Sigmoid colon (tissue), 7 donors: ENCODE measurements at regions of chr5 and their contacts with region 1.

Region 1: GRCh38 chr5:923281-923873 is 30.7 kb downstream of the TRIP13 start:
- DNase-seq: peak; percentile 89
- H3K4me3 ChIP-seq: no peak overlapping the region
- H3K27ac ChIP-seq: no peak overlapping the region
- H3K4me1 ChIP-seq: peaks cover 0 to 14% (median 13%) of the 10 kb centered on the region in 4 donors
- H3K27me3 ChIP-seq: peaks cover 0 to 15% (median 11%) of the 10 kb centered on the region in 3 donors
- CTCF ChIP-seq: peak; percentile 68 to 93 (median 80)
- EP300 ChIP-seq: no peak
- POLR2A ChIP-seq: no peak

Region 2: GRCh38 chr5:1140171-1140817 is 216.9 kb after region 1 on chr5:
- intact Hi-C with region 1: loop called (anchors 1 kb)
- DNase-seq: peak; percentile 88
- H3K4me3 ChIP-seq: no peak overlapping the region
- H3K27ac ChIP-seq: no peak overlapping the region
- H3K4me1 ChIP-seq: peaks cover 0 to 16% (median 8%) of the 10 kb centered on the region in 4 donors
- H3K27me3 ChIP-seq: no peaks in the 10 kb centered on the region
- CTCF ChIP-seq: peak; percentile 58 to 95 (median 82)
- EP300 ChIP-seq: no peak
- POLR2A ChIP-seq: no peak

Region 3: GRCh38 chr5:1294206-1294834 is 370.9 kb after region 1 on chr5:
- intact Hi-C with region 1: no loop called
- DNase-seq: peak; percentile 54
- H3K4me3 ChIP-seq: no peak overlapping the region
- H3K27ac ChIP-seq: no peak overlapping the region
- H3K4me1 ChIP-seq: peaks cover 0 to 9% (median 0%) of the 10 kb centered on the region in 4 donors
- H3K27me3 ChIP-seq: peaks cover 14 to 59% (median 30%) of the 10 kb centered on the region in 3 donors
- CTCF ChIP-seq: no peak
- EP300 ChIP-seq: no peak
- POLR2A ChIP-seq: no peak